ENCODE measurements at regions of chr20 and their contacts with region 1.

Region 1: DNA sequence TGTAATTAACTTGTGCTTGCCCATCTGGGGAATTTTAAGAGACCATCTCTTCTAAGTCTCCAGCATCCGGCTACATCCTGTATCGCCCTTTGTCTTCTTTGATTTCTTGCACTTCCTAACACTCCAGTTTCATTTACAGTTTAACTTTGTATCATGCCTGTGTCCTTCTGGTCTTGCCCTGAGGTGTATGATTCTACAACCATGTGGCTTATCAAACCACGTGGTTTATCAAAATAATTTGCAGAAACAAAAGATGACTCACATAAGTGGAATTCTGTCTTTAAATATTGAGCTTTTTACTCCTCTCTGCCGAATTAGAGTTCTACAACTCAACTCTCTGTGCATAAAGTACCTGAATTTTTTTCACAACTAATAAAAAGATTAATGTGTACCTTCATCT is 580.7 kb downstream of the KIF16B start:
- DNase-seq: no peak

Region 2: GRCh38 chr20:15446373-15446772 is 546.2 kb before region 1 on chr20:
- intact Hi-C with region 1: loop called in 1 of 2 experiments (anchors 5 kb)
- DNase-seq: no peak

Region 3: GRCh38 chr20:16007962-16008361 is 15.4 kb after region 1 on chr20:
- intact Hi-C with region 1: loop called in 1 of 2 experiments (anchors 1 kb)
- DNase-seq: no peak

Region 4: GRCh38 chr20:16308754-16309153 is 316.2 kb after region 1 on chr20:
- intact Hi-C with region 1: no loop called
- DNase-seq: no peak